ENCODE measurements at regions of chr16 and their contacts with region 1.

Region 1: DNA sequence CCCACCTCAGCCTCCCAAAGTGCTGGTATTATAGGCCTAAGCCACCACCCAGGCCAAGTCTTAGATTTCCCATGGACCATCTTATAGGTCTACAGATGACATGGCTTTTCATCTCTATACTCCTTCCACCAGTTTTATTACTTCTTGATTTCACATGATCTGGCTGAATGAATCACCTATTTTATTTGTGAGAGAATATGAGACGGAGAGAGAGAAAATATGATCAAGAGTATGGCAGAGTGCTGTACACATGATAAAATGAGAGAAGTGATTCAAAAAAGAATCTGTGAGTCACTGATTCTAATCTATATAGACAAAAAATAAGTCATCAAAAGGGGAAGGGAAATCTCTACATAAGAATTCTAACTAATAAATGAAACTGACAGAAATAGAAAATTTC is 13.7 kb downstream of the ACSM1 start:
- DNase-seq: no peak
- H3K4me3 Mint-ChIP-seq: peak overlapping the region; percentile 14
- H3K27ac Mint-ChIP-seq: peak overlapping the region; percentile 90
- H3K4me1 Mint-ChIP-seq: peaks cover 18% of the 10 kb centered on the region
- H3K27me3 Mint-ChIP-seq: no peaks in the 10 kb centered on the region

Region 2: GRCh38 chr16:20260215-20261007 is 423.4 kb before region 1 on chr16:
- intact Hi-C with region 1: no loop called
- DNase-seq: no peak
- H3K4me3 Mint-ChIP-seq: no peak overlapping the region
- H3K27ac Mint-ChIP-seq: no peak overlapping the region
- H3K4me1 Mint-ChIP-seq: no peaks in the 10 kb centered on the region
- H3K27me3 Mint-ChIP-seq: no peaks in the 10 kb centered on the region

Region 3: GRCh38 chr16:20538181-20538580 is 145.6 kb before region 1 on chr16:
- intact Hi-C with region 1: loop called (anchors 10 kb)
- DNase-seq: no peak
- H3K4me3 Mint-ChIP-seq: no peak overlapping the region
- H3K27ac Mint-ChIP-seq: peak overlapping the region; percentile 50
- H3K4me1 Mint-ChIP-seq: peaks cover 9% of the 10 kb centered on the region
- H3K27me3 Mint-ChIP-seq: no peaks in the 10 kb centered on the region